Mucosa of descending colon (tissue), 3 donors: ENCODE measurements at regions of chr3 and their contacts with region 1.

Region 1: GRCh38 chr3:132343018-132343612 is 25.9 kb downstream of the ACP3 start:
- DNase-seq: peak in 1 of 3 donors; percentile 78
- ATAC-seq: peak; percentile 79
- H3K4me3 ChIP-seq: no peak overlapping the region
- H3K4me1 ChIP-seq: no peaks in the 10 kb centered on the region
- CTCF ChIP-seq: peak; percentile 51

Region 2: DNA sequence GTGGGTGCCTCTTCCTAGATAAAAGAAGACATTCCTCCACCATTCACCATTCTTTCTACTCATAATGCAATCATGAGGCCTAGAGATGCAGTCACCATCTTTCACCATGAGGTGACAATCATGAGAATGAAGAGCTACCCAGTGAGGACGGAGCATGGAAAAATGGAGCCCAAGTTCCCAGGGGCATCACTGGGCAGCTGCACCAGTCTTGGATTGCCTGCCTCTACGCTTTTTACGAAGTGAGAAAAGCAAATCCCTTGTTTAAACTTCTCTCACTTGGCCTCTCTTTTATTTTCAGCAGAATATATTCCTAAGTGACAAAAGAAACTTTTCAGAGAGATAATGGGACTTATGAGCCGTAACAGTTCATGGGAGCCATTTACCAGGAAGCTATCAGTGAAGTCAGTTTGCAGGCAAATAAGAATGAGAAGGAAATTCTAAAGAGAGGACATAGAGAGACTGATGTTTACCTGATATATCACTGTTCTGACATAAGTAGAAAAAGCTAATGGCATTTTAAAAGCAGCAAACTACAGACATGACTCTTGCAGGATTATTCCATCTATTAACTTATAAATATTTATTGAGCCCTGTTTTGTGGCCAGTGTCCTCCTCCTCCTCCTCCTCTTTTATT is 218.3 kb before region 1 on chr3:
- intact Hi-C with region 1: no loop called
- DNase-seq: no peak
- ATAC-seq: no peak
- H3K4me3 ChIP-seq: no peak overlapping the region
- H3K4me1 ChIP-seq: no peaks in the 10 kb centered on the region
- CTCF ChIP-seq: no peak

Region 3: GRCh38 chr3:132253262-132253878 is 89.7 kb before region 1 on chr3:
- intact Hi-C with region 1: loop called (anchors 1 to 10 kb)
- DNase-seq: peak in 1 of 3 donors; percentile 59
- ATAC-seq: peak; percentile 80
- H3K4me3 ChIP-seq: no peak overlapping the region
- H3K4me1 ChIP-seq: no peaks in the 10 kb centered on the region
- CTCF ChIP-seq: peak; percentile 41

Region 4: GRCh38 chr3:132535575-132536441 is 192.7 kb after region 1 on chr3:
- intact Hi-C with region 1: no loop called
- DNase-seq: peak in 1 of 3 donors; percentile 77
- ATAC-seq: peak; percentile 83
- H3K4me3 ChIP-seq: no peak overlapping the region
- H3K4me1 ChIP-seq: no peaks in the 10 kb centered on the region
- CTCF ChIP-seq: peak; percentile 32